Endothelial cell of umbilical vein (primary cell): ENCODE measurements at regions of chr11 and their contacts with region 1.

Region 1: GRCh38 chr11:506238-506994 is 626 bp downstream of the RNH1 start:
- DNase-seq: peak; percentile 98
- H3K4me3 ChIP-seq: peak overlapping the region; percentile 69 to 81 (median 79)
- H3K27ac ChIP-seq: peak overlapping the region; percentile 99
- H3K4me1 ChIP-seq: peaks cover 24% of the 10 kb centered on the region
- H3K27me3 ChIP-seq: no peaks in the 10 kb centered on the region
- CTCF ChIP-seq: no peak
- POLR2A ChIP-seq: peak; percentile 53

Region 2: GRCh38 chr11:207208-207862 is 299.1 kb before region 1 on chr11 and contains the starts of genes BET1L and RIC8A:
- CTCF ChIA-PET with region 1: no interaction called
- POLR2A ChIA-PET with region 1: interaction called, 4 read pairs
- dilution Hi-C with region 1: no loop called
- intact Hi-C with region 1: loop called (anchors 1 kb)
- DNase-seq: peak; percentile 97
- H3K4me3 ChIP-seq: peak within 1 kb of the TSS; percentile 68 to 92 (median 74)
- H3K27ac ChIP-seq: peak within 1 kb of the TSS; percentile 96
- H3K4me1 ChIP-seq: peaks cover 23% of the 10 kb centered on the region
- H3K27me3 ChIP-seq: no peaks in the 10 kb centered on the region
- CTCF ChIP-seq: no peak
- POLR2A ChIP-seq: peak; percentile 84
- total RNA-seq, gene BET1L: 31.0 and 35.5 TPM in 2 replicates
- total RNA-seq, gene RIC8A: 112 and 119 TPM in 2 replicates

Region 3: GRCh38 chr11:236774-237767 is 269.3 kb before region 1 on chr11 and contains the start of gene PSMD13:
- CTCF ChIA-PET with region 1: no interaction called
- POLR2A ChIA-PET with region 1: no interaction called
- dilution Hi-C with region 1: no loop called
- intact Hi-C with region 1: loop called (anchors 2 kb)
- DNase-seq: peak; percentile 85
- H3K4me3 ChIP-seq: peak within 1 kb of the TSS; percentile 81 to 100 (median 99)
- H3K27ac ChIP-seq: peak within 1 kb of the TSS; percentile 92
- H3K4me1 ChIP-seq: peaks cover 16% of the 10 kb centered on the region
- H3K27me3 ChIP-seq: no peaks in the 10 kb centered on the region
- CTCF ChIP-seq: no peak
- POLR2A ChIP-seq: peak; percentile 83
- total RNA-seq, gene PSMD13: 168 and 179 TPM in 2 replicates

Region 4: DNA sequence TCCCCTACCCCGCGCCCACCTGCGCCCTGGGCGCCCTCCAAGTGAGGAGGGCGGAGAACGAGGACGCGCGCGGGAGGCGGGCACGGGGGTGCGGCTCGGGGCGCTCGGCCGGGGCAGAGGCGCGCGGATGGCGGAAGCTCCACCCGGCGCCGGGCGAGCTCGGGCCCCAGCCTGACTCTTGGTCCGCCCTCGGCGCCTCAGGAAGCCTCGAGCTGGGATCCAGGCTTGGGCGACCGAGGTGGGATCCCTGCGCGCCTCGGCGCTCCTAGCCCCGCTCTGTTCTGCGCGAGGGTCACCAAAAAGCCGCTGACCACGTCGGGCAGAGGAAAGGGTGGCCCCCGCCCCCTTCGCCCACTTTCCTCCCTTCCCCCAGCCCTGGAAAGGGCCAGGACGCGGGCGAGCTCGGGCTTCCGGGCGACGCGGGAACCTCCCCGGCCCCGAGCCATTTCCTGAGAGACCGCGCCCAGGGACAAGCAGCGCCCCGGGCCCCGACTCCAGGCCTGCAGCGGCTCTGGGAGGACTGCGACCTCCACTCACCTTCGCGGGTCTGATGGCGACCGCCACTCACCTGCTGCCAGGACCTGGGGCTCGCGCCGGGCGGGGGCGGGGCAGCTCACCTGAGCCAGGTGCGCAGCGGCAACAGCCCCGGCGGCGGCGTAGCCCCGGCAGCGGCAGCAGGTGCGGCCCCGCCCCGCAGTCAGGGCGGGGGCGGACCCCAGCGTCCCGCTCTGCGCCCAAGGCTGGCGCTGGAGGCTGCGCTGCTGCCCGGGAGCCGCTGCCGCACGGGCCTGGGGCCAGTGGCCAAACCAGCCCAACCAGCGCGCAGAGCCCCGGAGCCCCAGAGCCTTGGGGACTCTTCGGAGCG is 89.4 kb before region 1 on chr11:
- CTCF ChIA-PET with region 1: no interaction called
- POLR2A ChIA-PET with region 1: no interaction called
- dilution Hi-C with region 1: no loop called
- intact Hi-C with region 1: loop called (anchors 2 kb)
- DNase-seq: peak; percentile 18
- H3K4me3 ChIP-seq: peak overlapping the region; percentile 20 to 40 (median 30)
- H3K27ac ChIP-seq: no peak overlapping the region
- H3K4me1 ChIP-seq: peaks cover 21% of the 10 kb centered on the region
- H3K27me3 ChIP-seq: no peaks in the 10 kb centered on the region
- CTCF ChIP-seq: no peak
- POLR2A ChIP-seq: peak; percentile 58